ENCODE measurements at regions of chr1 and their contacts with region 1.

Region 1: GRCh38 chr1:28369371-28370238 is at the start of gene PHACTR4:
- DNase-seq: peak; percentile 95 to 99 (median 97)
- ATAC-seq: peak; percentile 97
- H3K4me3 ChIP-seq: peak within 1 kb of the TSS; percentile 55
- H3K27ac ChIP-seq: peak within 1 kb of the TSS; percentile 89
- H3K4me1 ChIP-seq: peaks cover 17 to 31% of the 10 kb centered on the region in 2 experiments; a peak in 4 of 5 replicates
- H3K27me3 ChIP-seq: no peaks in the 10 kb centered on the region
- CTCF ChIP-seq: peak in 1 of 3 experiments; percentile 13; a peak in 2 of 6 replicates
- EP300 ChIP-seq: peak; percentile 34
- POLR2A ChIP-seq: peak; percentile 99
- RAD21 ChIP-seq: peak in 1 of 2 experiments; percentile 10; a peak in 2 of 4 replicates
- polyA plus RNA-seq, gene PHACTR4: 12.8 to 14.2 TPM

Region 2: DNA sequence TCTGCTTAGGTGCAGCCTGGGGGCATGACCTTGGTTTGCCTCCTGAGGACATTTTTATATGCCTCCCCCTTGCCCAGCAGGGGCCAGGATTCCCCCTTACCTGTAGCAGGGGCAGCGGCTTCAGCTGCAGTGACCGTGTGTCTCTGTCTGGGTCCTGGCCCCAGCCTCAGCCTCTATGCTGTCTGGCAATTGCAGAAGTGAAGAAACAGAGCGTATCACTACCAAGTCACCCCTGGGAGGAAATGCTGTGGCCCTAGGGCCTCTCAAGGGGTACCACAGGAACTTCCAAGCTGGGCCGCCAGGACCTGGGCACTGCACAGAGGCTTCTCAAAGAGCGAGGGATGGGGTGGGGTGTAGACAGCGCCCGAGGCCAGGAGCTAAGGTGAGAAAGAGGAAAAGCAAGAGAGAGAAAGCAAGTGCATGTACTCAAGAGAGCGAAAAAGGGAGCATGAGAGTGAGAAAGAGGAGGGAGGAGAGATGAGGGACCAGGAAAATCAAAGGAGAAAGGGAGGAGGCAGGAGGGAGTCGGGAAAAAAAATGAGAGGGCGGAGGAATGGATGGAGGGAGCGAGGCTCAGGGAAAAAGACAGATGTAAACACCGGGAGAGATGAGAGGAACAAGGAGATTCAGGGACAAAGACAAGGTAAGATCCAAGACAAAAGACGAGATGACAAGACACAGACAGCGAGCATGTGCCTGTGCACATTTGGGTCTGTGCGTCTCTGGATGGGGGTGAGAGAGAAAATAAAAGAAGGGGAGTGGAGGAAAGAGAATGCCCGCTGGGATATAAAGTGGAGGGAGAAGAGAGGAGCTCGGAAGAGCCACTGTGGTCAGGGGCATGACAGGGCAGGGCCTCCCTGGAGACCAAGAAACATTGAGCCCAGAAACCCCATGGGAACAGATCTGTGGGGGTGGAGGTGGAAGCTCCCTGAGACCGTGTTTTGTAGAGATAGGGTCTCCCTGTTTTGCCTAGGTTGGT is 192.8 kb before region 1 on chr1 and contains the start of gene PTAFR:
- CTCF ChIA-PET with region 1: no interaction called
- POLR2A ChIA-PET with region 1: no interaction called
- in situ Hi-C with region 1: no loop called
- intact Hi-C with region 1: no loop called
- DNase-seq: no peak
- ATAC-seq: no peak
- H3K4me3 ChIP-seq: no peak within 1 kb of the TSS
- H3K27ac ChIP-seq: no peak within 1 kb of the TSS
- H3K4me1 ChIP-seq: peaks cover 24 to 33% of the 10 kb centered on the region in 2 experiments
- H3K27me3 ChIP-seq: peaks cover 0 to 4% of the 10 kb centered on the region in 2 experiments; a peak in 2 of 5 replicates
- CTCF ChIP-seq: no peak
- EP300 ChIP-seq: no peak
- POLR2A ChIP-seq: no peak
- RAD21 ChIP-seq: no peak
- polyA plus RNA-seq, gene PTAFR: 0.15 to 0.48 TPM

Region 3: DNA sequence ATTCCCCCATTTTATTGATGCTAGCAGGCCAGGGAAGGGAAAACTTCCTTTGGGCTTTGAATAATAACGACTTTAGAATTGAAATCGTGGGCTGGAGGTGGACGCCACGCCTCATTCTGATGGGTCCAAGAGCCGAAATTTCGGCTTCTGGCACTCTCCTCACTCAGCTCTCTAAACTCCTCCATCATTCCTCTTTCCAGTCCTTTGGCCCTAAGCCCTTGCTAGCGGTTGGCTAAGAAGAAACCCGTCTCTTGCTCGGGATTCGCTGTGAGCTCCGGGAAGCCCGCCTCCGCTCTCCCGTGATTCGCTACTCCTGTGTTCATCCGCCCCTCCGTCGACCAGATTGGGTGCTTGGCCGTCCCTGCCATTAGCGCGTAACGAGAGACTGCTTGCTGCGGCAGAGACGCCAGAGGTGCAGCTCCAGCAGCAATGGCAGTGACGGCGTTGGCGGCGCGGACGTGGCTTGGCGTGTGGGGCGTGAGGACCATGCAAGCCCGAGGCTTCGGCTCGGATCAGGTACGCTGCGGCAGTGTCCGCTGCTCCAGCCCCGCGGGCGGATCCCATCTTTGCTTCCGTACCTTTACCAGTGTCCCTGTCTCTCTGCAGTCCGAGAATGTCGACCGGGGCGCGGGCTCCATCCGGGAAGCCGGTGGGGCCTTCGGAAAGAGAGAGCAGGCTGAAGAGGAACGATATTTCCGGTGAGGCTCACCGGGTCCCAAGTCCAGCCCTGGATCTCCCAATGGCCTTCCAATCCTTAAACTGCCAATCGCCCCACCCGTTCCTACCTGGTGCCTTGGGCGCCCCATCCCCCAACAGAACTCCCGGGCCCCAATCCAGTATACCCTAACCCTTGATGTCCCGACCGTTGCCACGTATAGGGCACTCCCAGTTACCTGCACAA is 133.6 kb before region 1 on chr1 and contains the start of gene ATP5IF1:
- CTCF ChIA-PET with region 1: no interaction called
- POLR2A ChIA-PET with region 1: interaction called, 10 read pairs
- in situ Hi-C with region 1: no loop called
- intact Hi-C with region 1: no loop called
- DNase-seq: peak; percentile 99 to 100 (median 99)
- ATAC-seq: peak; percentile 93
- H3K4me3 ChIP-seq: peak within 1 kb of the TSS; percentile 67
- H3K27ac ChIP-seq: peak within 1 kb of the TSS; percentile 71
- H3K4me1 ChIP-seq: peaks cover 19 to 29% of the 10 kb centered on the region in 2 experiments
- H3K27me3 ChIP-seq: no peaks in the 10 kb centered on the region
- CTCF ChIP-seq: no peak
- EP300 ChIP-seq: 0 out of 2 replicates have a peak, but pooled peaks have one; percentile 20
- POLR2A ChIP-seq: peak; percentile 98
- RAD21 ChIP-seq: no peak
- polyA plus RNA-seq, gene ATP5IF1: 292 to 545 TPM

Region 4: GRCh38 chr1:28380394-28380793 is 10.8 kb after region 1 on chr1:
- CTCF ChIA-PET with region 1: interaction called, 4 read pairs
- POLR2A ChIA-PET with region 1: interaction called, 16 read pairs
- in situ Hi-C with region 1: no loop called
- intact Hi-C with region 1: no loop called
- DNase-seq: no peak
- ATAC-seq: no peak
- H3K4me3 ChIP-seq: no peak overlapping the region
- H3K27ac ChIP-seq: no peak overlapping the region
- H3K4me1 ChIP-seq: peaks cover 9 to 20% of the 10 kb centered on the region in 2 experiments
- H3K27me3 ChIP-seq: no peaks in the 10 kb centered on the region
- CTCF ChIP-seq: no peak
- EP300 ChIP-seq: no peak
- POLR2A ChIP-seq: no peak
- RAD21 ChIP-seq: no peak

Region 5: GRCh38 chr1:28395181-28395580 is 25.6 kb after region 1 on chr1:
- CTCF ChIA-PET with region 1: no interaction called
- POLR2A ChIA-PET with region 1: interaction called, 12 read pairs
- in situ Hi-C with region 1: no loop called
- intact Hi-C with region 1: no loop called
- DNase-seq: peak; percentile 45 to 59 (median 57)
- ATAC-seq: peak; percentile 68
- H3K4me3 ChIP-seq: no peak overlapping the region
- H3K27ac ChIP-seq: peak overlapping the region; percentile 74
- H3K4me1 ChIP-seq: peaks cover 20 to 23% of the 10 kb centered on the region in 2 experiments; a peak in 4 of 5 replicates
- H3K27me3 ChIP-seq: no peaks in the 10 kb centered on the region
- CTCF ChIP-seq: no peak
- EP300 ChIP-seq: peak; percentile 37; the same call in 1 of the 2 replicates
- POLR2A ChIP-seq: no peak
- RAD21 ChIP-seq: 0 out of 4 replicates have a peak, but pooled peaks of 1 of the 2 experiments have one; percentile 2

Region 6: DNA sequence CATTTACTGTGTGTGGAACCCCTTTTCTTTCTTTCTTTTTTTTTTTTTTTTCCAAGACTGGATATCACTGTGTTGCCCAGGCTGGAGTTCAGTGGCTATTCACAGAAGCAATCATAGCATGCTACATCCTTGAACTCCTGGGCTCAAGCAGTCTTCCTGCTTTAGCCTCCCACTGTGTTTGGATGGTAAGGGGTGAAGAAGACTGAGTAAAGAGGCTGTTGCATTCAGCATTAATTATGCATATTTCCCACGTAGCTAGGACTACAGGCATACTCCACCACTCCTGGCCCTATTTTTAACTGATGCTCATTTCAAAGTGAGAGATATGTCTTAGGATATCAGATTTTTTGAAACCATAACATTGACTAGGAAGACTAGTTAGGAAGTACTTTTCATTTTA is 39.5 kb after region 1 on chr1:
- CTCF ChIA-PET with region 1: no interaction called
- POLR2A ChIA-PET with region 1: interaction called, 4 read pairs
- in situ Hi-C with region 1: no loop called
- intact Hi-C with region 1: loop called (anchors 5 kb)
- DNase-seq: no peak
- ATAC-seq: no peak
- H3K4me3 ChIP-seq: no peak overlapping the region
- H3K27ac ChIP-seq: no peak overlapping the region
- H3K4me1 ChIP-seq: peaks cover 3 to 23% of the 10 kb centered on the region in 2 experiments; a peak in 3 of 5 replicates
- H3K27me3 ChIP-seq: no peaks in the 10 kb centered on the region
- CTCF ChIP-seq: no peak
- EP300 ChIP-seq: no peak
- POLR2A ChIP-seq: no peak
- RAD21 ChIP-seq: no peak